WTC11 (cell line): ENCODE measurements at regions of chr1 and their contacts with region 1.

Region 1: DNA sequence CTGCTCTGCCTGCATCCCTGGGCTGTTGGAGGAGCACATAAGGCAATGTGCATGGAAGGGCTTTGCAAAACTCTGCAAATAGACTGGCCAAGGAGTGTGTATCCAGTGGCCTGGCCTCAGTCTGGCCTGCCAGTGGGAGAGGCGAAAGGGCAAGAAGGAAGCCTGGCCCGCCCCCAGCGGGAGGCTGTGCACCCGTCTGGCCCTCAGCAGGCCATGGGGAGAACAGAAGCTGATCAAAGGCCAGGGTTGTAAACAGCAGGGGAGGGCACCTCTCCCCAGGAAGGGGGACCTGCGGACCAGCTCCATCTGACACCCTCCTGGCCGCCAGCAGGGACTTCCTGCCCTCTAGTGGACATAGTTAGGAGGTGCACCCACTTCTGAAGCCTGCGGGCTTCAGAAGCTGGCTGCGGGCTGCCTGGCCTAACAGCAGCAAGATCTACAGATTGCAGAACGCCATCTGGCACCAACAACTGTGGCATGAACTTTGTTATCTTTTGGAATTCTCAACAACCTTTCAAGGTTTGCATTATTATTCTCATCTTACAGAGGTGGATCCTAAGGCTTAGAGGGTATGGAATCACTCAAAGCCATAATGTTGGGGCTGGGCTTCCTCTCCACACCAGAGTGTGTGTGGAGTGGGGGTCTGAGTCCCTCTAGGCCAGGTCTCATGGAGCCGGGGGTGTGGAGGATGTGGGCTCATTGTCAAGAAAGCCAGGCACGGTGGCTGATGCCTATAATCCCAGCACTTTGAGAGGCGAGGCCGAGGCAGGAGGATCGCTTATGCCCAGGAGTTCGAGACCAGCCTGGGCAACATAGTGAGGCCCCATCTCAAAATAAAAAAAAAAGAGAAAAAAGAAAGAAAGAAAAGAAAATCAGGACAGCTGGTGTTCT is 18.9 kb upstream of the CDK18 start:
- DNase-seq: peak; percentile 81
- ATAC-seq: peak; percentile 75
- H3K4me3 Mint-ChIP-seq: no peak overlapping the region
- H3K27ac Mint-ChIP-seq: no peak overlapping the region
- H3K4me1 Mint-ChIP-seq: peaks cover 33% of the 10 kb centered on the region
- H3K27me3 Mint-ChIP-seq: peaks cover 28% of the 10 kb centered on the region
- CTCF ChIP-seq: peak; percentile 98

Region 2: DNA sequence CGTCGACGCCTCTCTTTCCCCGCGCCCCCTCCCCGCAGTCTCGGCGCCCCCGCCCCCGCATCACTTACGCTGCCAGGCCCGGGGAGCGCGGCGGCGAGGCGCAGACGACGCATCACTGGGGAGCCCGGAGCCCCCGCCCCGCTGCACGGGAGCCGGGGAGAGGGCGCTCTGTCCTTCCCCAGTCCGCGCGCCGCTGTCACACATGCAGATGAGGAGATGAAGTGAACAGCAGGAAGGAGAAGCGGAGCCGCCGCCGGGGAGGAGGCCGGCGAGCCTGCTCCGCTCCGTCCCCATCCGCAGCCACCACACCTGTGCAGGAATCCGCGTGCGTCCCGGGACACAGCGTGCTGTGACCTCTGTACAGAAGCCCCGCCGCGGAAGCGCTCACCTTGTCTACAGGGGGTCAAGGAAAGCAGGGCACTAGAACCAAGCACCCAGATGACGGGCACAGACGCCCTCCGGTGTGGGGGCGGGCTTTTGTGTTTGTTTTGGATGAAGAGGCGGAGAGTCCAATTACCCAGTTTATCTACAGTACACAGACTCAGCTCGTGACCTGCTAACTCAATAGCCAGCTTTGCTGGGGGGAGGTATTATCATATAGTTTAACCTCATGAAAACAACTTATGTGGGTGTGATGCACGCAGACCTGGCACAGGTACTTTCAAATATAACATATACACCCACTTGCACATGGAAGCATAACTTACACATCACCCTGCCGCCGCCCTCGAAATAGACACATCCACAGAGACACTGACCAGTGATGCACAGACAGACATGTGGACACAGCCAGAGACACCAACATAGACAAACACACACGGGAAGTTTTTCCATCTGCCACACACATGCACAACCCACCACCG is 141.3 kb before region 1 on chr1:
- CTCF ChIA-PET with region 1: interaction called, 10 read pairs
- POLR2A ChIA-PET with region 1: no interaction called
- DNase-seq: peak; percentile 66
- ATAC-seq: peak; percentile 57
- H3K4me3 Mint-ChIP-seq: peak overlapping the region; percentile 72
- H3K27ac Mint-ChIP-seq: no peak overlapping the region
- H3K4me1 Mint-ChIP-seq: peaks cover 33% of the 10 kb centered on the region
- H3K27me3 Mint-ChIP-seq: peaks cover 55% of the 10 kb centered on the region
- CTCF ChIP-seq: no peak

Region 3: GRCh38 chr1:205416322-205416721 is 69.3 kb before region 1 on chr1:
- CTCF ChIA-PET with region 1: interaction called, 19 read pairs
- POLR2A ChIA-PET with region 1: no interaction called
- DNase-seq: no peak
- ATAC-seq: no peak
- H3K4me3 Mint-ChIP-seq: no peak overlapping the region
- H3K27ac Mint-ChIP-seq: no peak overlapping the region
- H3K4me1 Mint-ChIP-seq: peaks cover 8% of the 10 kb centered on the region
- H3K27me3 Mint-ChIP-seq: peaks cover 12% of the 10 kb centered on the region
- CTCF ChIP-seq: no peak

Region 4: GRCh38 chr1:205449750-205450443 is 35.7 kb before region 1 on chr1:
- CTCF ChIA-PET with region 1: interaction called, 210 read pairs
- POLR2A ChIA-PET with region 1: interaction called, 5 read pairs
- DNase-seq: peak; percentile 74
- ATAC-seq: peak; percentile 13
- H3K4me3 Mint-ChIP-seq: peak overlapping the region; percentile 74
- H3K27ac Mint-ChIP-seq: peak overlapping the region; percentile 72
- H3K4me1 Mint-ChIP-seq: peaks cover 93% of the 10 kb centered on the region
- H3K27me3 Mint-ChIP-seq: peaks cover 13% of the 10 kb centered on the region
- CTCF ChIP-seq: no peak

Region 5: GRCh38 chr1:205512059-205513045 is 26.8 kb after region 1 on chr1:
- CTCF ChIA-PET with region 1: interaction called, 21 read pairs
- POLR2A ChIA-PET with region 1: no interaction called
- DNase-seq: no peak
- ATAC-seq: no peak
- H3K4me3 Mint-ChIP-seq: no peak overlapping the region
- H3K27ac Mint-ChIP-seq: peak overlapping the region; percentile 51
- H3K4me1 Mint-ChIP-seq: peaks cover 53% of the 10 kb centered on the region
- H3K27me3 Mint-ChIP-seq: no peaks in the 10 kb centered on the region
- CTCF ChIP-seq: no peak

Region 6: DNA sequence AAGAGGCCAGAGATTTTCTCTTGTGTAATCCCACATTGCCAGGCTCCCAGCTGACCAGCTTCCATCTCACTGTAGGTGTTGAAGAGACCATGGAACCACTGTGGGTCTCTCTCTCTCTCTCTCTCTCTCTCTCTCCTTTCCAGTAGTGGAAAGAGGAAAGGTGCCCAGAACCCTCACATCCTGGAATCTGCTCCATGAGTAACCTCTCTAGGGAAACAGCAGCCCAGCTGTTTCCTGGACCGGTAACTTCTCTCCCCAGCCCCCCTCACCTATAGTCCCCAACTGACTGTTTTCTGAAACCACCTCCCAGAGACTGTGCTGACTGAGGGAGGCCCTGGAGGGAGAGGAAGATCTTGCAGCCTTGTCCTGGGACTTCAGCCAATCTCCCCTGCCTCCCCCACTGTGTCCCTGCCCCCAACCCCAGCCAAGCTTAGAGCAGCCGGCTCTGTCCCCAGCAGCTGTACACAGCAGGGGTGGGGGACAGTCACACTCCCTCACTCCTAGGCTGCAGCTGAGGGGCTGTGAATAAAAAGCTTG is 215.3 kb after region 1 on chr1:
- CTCF ChIA-PET with region 1: no interaction called
- POLR2A ChIA-PET with region 1: no interaction called
- DNase-seq: peak; percentile 34
- ATAC-seq: peak; percentile 57
- H3K4me3 Mint-ChIP-seq: no peak overlapping the region
- H3K27ac Mint-ChIP-seq: no peak overlapping the region
- H3K4me1 Mint-ChIP-seq: peaks cover 17% of the 10 kb centered on the region
- H3K27me3 Mint-ChIP-seq: no peaks in the 10 kb centered on the region
- CTCF ChIP-seq: no peak